SK-N-SH (cell line): ENCODE measurements at regions of chr3 and their contacts with region 1.

Region 1: DNA sequence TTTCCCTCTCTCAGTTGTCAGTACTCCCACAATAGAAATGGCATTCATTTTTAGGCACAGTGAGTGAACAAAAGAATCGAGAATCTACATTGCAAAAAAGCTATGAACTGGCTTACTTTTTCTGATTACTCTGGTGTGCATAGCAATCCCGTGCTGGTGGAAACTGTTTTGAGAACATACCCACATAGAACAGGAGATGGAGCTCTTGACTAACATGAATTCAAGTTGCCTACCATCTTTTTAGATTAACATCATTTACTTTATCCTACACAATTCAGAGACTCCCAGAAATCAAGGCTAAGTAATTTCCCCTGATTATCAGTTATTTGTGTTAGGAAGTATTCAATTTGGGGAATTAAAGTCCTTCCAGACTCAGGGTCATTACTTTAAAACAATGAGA is 326.6 kb downstream of the ARPP21 start:
- DNase-seq: peak; percentile 46
- H3K4me3 ChIP-seq: peak overlapping the region in 1 of 2 experiments; percentile 12; a peak in 1 of 4 replicates
- H3K27ac ChIP-seq: peak overlapping the region in 1 of 2 experiments; percentile 9; a peak in 2 of 4 replicates
- H3K4me1 ChIP-seq: peaks cover 8 to 13% of the 10 kb centered on the region in 2 experiments; a peak in 3 of 4 replicates
- H3K27me3 ChIP-seq: no peaks in the 10 kb centered on the region
- CTCF ChIP-seq: peak; percentile 78
- EP300 ChIP-seq: no peak
- RAD21 ChIP-seq: peak; percentile 96

Region 2: GRCh38 chr3:35670408-35670965 is 295.4 kb before region 1 on chr3:
- CTCF ChIA-PET with region 1: no interaction called
- POLR2A ChIA-PET with region 1: no interaction called
- DNase-seq: no peak
- H3K4me3 ChIP-seq: no peak overlapping the region
- H3K27ac ChIP-seq: no peak overlapping the region; a peak in 1 of 4 replicates
- H3K4me1 ChIP-seq: peaks cover 5 to 7% of the 10 kb centered on the region in 2 experiments; a peak in 2 of 4 replicates
- H3K27me3 ChIP-seq: no peaks in the 10 kb centered on the region
- CTCF ChIP-seq: no peak
- EP300 ChIP-seq: no peak
- RAD21 ChIP-seq: no peak

Region 3: DNA sequence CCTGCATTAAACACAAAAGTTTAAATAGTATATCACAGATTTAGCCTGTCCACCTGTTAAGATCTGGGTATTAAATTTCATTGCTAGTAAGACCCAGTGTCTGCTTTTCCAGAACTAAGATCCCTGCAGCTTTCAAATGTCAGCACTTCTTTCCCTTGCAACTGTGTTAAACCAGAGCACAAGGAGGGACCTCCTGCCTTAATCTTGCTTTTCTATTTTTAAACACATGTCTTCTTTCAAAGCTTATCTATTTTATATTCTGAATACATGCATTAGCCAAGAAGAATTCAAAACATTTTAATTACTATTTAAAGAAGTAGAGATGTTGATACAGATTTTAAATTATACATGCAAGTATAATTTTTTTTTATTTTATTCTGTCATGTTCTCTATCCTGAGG is 11.5 kb before region 1 on chr3:
- CTCF ChIA-PET with region 1: interaction called, 27 read pairs
- POLR2A ChIA-PET with region 1: no interaction called
- DNase-seq: no peak
- H3K4me3 ChIP-seq: no peak overlapping the region
- H3K27ac ChIP-seq: no peak overlapping the region
- H3K4me1 ChIP-seq: peaks cover 0 to 3% of the 10 kb centered on the region in 2 experiments; a peak in 2 of 4 replicates
- H3K27me3 ChIP-seq: no peaks in the 10 kb centered on the region
- CTCF ChIP-seq: no peak
- EP300 ChIP-seq: no peak
- RAD21 ChIP-seq: no peak

Region 4: GRCh38 chr3:36520241-36521006 is 554.5 kb after region 1 on chr3:
- CTCF ChIA-PET with region 1: interaction called, 16 read pairs
- POLR2A ChIA-PET with region 1: no interaction called
- DNase-seq: peak; percentile 49
- H3K4me3 ChIP-seq: no peak overlapping the region
- H3K27ac ChIP-seq: peak overlapping the region; percentile 17 to 99; a peak in 3 of 4 replicates
- H3K4me1 ChIP-seq: peaks cover 0 to 54% of the 10 kb centered on the region in 2 experiments; a peak in 2 of 4 replicates
- H3K27me3 ChIP-seq: no peaks in the 10 kb centered on the region
- CTCF ChIP-seq: no peak
- EP300 ChIP-seq: peak in 1 of 2 experiments; percentile 99; a peak in 3 of 4 replicates
- RAD21 ChIP-seq: peak; percentile 33

Region 5: DNA sequence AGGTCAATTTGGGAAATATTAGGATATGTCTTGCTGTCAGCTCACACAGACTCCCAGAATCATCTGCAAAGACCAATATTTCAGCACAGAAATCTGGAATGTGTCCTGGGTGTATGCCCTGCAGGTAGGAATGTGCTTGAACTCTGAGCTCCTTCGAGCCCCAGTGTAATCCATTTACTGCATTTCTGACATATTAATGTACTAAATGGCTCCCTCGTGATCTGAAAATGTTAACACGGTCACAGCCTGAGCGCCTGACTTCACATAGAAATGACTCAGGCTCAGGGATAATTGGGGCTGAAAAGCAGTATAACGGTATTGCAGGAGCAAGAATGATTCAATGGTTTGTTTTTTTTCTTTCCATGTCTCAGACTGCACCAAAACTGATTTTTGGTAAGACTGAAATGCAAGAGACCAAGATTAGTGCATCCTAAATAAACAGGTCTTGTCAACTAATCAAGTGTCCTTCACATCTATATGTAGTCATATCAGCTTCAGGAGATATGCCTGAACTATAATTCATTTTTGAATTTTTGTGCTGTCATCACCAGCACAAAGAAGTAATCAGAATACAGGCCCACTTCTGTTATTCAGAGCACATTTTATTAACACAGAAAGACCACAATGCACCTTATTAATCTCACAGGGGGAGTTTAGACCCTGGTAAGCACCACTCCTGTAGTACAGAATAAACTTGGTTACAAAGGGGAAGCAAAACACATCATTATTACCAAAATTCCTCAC is 748.6 kb after region 1 on chr3:
- CTCF ChIA-PET with region 1: interaction called, 20 read pairs
- POLR2A ChIA-PET with region 1: no interaction called
- DNase-seq: no peak
- H3K4me3 ChIP-seq: no peak overlapping the region
- H3K27ac ChIP-seq: no peak overlapping the region
- H3K4me1 ChIP-seq: no peaks in the 10 kb centered on the region; a peak in 1 of 4 replicates
- H3K27me3 ChIP-seq: no peaks in the 10 kb centered on the region
- CTCF ChIP-seq: peak; percentile 42; the same call in 1 of the 2 replicates
- EP300 ChIP-seq: no peak
- RAD21 ChIP-seq: no peak